ENCODE measurements at regions of chr5 and their contacts with region 1.

Region 1: DNA sequence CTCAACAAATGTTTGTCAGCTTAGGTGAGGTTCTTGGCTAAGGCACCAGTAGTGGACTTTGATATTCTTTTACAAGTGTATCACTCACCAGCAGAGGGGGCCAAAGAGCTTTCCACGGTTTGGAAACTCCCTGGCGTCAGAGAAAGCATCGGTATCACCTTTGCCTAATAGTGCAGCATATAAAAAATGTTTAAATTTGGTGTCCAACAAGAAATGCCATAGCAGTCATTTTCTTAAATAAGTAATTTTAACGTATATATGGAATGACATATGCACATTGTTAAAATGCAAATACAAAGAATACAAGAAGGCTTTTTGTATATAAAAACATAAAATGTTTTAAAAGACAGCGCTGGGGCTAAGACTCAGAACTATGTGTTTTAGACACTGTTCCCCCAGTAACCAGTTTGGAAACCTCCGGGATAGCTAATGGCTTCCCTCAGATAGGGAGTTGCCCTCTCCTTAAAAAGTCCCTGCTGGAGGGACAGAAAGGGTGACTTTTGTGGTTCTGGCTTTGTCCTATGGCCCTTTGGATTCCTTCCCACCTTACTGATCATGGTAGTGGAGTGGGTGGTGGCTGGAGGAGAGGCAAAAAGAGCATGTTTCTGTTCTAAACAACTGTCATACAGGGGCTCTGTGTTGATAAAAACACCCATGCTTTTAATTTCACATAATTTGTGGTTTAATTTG is 124.6 kb downstream of the GPBP1 start:
- DNase-seq: peak; percentile 96
- H3K4me3 ChIP-seq: peak overlapping the region in 3 of 4 donors; percentile 23 to 44 (median 33)
- H3K27ac ChIP-seq: no peak overlapping the region
- H3K4me1 ChIP-seq: peaks cover 5 to 12% (median 10%) of the 10 kb centered on the region in 4 donors
- H3K27me3 ChIP-seq: no peaks in the 10 kb centered on the region
- CTCF ChIP-seq: peak; percentile 74 to 78 (median 77)
- EP300 ChIP-seq: no peak
- POLR2A ChIP-seq: no peak

Region 2: DNA sequence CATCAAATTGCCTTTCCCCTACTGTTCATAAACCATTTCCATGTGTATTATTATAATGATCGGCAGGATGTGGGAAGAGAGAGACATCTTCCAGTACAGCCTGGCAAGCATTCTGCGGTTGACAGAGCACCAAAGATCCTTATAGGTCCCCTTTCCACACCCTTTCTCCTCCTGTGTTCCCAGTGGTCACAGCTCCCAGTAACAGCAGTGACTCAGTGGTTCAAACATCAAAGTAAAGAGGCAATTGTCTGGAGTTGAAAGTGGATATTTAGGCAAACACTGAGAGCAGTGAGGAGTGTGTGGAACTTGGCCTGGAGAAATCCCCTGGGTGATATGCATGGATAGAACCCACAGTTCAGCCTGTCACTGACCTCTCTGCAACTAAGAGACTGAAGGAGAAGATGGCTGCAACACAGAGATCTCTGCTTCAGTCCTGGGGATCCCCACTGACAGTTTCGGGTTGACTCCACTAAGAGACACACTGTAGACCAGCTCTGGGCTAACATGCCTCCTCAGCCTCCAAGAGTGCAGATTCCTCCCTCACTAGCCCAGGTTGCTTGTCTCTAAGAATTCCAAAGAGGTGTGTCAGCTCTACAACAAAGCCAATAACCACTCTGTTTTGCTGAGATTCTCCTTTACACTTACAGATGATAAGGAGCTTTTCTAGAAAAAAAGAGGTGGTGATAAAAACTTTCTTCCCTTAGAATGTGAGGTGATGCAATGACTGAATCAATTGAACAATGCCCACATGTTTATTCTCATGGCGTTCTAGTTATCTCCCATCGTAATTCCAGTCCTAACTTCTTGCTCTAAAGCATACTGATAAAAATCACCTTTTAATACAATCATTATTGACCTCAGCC is 1209.2 kb before region 1 on chr5:
- intact Hi-C with region 1: no loop called
- DNase-seq: no peak
- H3K4me3 ChIP-seq: no peak overlapping the region
- H3K27ac ChIP-seq: no peak overlapping the region
- H3K4me1 ChIP-seq: peaks cover 2 to 26% (median 19%) of the 10 kb centered on the region in 4 donors
- H3K27me3 ChIP-seq: no peaks in the 10 kb centered on the region
- CTCF ChIP-seq: no peak
- EP300 ChIP-seq: no peak
- POLR2A ChIP-seq: no peak

Region 3: DNA sequence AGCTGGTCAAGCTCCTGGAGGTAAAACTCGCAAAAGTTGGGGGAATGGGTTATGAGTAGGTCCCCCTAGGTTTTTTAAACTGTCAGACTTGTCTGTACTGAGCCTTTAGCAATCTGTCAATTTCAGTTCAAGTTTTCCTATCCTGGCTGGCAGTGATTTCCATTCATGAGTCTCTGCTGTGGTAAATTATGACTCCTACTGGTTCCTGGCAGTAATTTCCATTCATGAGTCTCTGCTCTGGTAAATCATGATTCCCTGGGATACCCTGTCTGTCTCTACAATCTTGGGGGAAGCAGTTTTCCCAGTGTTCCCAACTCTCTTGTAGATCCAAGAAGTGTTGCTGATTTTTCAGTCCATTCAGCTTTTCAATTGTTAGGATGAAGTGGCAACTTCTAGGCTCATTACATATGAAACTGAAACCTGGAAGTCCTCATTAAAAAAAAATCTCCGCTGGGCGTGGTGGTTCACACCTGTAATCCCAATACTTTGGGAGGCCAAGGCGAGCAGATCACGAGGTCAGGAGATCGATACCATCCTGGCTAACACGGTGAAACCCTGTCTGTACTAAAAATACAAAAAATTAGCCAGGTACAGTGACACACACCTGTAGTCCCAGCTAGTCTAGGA is 215.9 kb before region 1 on chr5:
- intact Hi-C with region 1: no loop called
- DNase-seq: no peak
- H3K4me3 ChIP-seq: no peak overlapping the region
- H3K27ac ChIP-seq: no peak overlapping the region
- H3K4me1 ChIP-seq: no peaks in the 10 kb centered on the region
- H3K27me3 ChIP-seq: no peaks in the 10 kb centered on the region
- CTCF ChIP-seq: no peak
- EP300 ChIP-seq: no peak
- POLR2A ChIP-seq: no peak

Region 4: GRCh38 chr5:57249265-57249874 is 49.1 kb before region 1 on chr5:
- intact Hi-C with region 1: no loop called
- DNase-seq: no peak
- H3K4me3 ChIP-seq: no peak overlapping the region
- H3K27ac ChIP-seq: no peak overlapping the region
- H3K4me1 ChIP-seq: no peaks in the 10 kb centered on the region
- H3K27me3 ChIP-seq: no peaks in the 10 kb centered on the region
- CTCF ChIP-seq: no peak
- EP300 ChIP-seq: no peak
- POLR2A ChIP-seq: no peak

Region 5: DNA sequence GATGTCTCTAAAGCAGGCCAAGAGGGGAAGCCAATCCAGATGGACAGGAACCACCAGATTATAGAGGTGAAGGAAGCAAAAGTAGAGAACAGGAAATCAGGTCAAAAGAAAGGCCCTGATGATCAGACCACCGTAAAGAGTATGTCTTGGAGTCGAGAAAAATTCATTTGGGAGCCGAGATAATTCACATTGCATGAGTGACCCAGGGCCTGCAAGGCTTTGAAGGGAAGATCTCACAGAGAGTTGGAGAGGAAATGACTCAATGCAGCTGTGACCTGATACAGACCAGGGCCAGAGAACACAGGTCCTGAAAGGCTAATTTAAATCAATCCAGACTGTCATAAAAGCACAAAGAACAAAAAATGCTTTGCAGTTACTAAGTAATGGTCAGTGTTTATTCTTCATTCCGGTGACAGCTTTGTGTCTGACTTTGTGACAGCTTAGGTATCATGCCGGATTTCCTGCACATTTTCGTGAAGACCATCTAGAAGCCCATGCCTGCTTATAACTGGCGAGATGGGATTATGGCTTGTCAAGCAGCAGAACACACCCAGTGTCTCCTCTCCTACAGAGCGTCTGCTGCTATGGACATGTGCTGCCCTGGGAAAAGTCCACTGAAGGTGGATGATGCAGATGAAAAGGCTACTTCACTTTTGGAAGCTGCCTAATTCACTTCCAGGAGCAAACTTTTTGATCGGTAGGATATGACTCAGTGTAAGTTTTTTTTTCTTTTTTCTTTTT is 189.9 kb after region 1 on chr5:
- intact Hi-C with region 1: no loop called
- DNase-seq: no peak
- H3K4me3 ChIP-seq: no peak overlapping the region
- H3K27ac ChIP-seq: no peak overlapping the region
- H3K4me1 ChIP-seq: peaks cover 0 to 3% (median 0%) of the 10 kb centered on the region in 4 donors
- H3K27me3 ChIP-seq: no peaks in the 10 kb centered on the region
- CTCF ChIP-seq: no peak
- EP300 ChIP-seq: no peak
- POLR2A ChIP-seq: no peak

Region 6: GRCh38 chr5:57779383-57780223 is 481.2 kb after region 1 on chr5:
- intact Hi-C with region 1: loop called (anchors 5 kb)
- DNase-seq: no peak
- H3K4me3 ChIP-seq: no peak overlapping the region
- H3K27ac ChIP-seq: peak overlapping the region in 2 of 4 donors; percentile 10 to 22
- H3K4me1 ChIP-seq: peaks cover 11 to 14% (median 11%) of the 10 kb centered on the region in 4 donors
- H3K27me3 ChIP-seq: no peaks in the 10 kb centered on the region
- CTCF ChIP-seq: peak; percentile 59 to 64 (median 60)
- EP300 ChIP-seq: no peak
- POLR2A ChIP-seq: no peak